ENCODE measurements at regions of chr1 and their contacts with region 1.

Region 1: GRCh38 chr1:93021539-93022134 is 57.4 kb upstream of the MTF2 start:
- DNase-seq: no peak
- H3K4me3 ChIP-seq: no peak overlapping the region
- H3K27ac ChIP-seq: no peak overlapping the region
- H3K27me3 ChIP-seq: no peaks in the 10 kb centered on the region
- CTCF ChIP-seq: peak; percentile 56 to 86 (median 75)

Region 2: DNA sequence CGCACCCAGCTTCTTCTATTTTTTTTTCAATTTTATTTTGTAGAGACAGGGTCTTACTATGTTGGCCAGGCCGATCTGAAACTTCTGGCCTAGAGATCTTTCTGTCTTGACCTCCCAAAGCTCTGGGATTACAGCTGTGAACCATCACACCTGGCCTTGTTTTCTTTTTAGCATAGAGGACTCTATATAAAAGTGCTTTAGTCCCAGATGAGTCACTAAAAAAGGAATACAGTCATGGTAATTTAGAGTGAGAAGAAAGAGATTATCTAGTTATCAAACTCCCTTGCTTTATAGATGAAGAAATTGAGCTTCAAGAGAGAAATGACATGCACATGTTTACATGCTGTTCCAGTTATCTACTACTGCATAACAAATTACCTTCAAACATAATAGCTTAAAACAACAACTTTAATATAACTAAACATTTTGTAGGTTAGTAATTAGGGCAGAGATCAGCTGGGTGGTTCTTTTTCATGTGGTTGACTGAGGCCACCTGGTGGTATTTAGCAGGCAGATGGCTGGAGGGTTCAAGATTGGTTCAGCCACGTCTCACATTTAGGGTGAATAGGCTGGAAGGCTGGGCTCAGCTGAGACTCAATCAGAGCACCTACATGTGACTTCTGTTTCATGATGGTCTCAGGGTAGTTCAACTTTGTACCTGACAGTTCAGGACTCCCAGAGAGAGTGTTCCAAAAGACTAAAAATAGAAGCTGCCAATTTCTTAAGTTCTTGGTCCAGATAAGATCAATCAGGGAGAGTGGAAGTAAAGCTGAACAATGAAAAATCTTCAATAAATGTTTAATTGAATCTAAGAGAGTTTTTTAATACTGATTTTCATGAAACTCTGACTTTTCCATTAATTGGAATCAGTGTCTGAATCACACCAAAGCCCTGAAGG is 40.5 kb after region 1 on chr1:
- intact Hi-C with region 1: loop called in 1 of 2 experiments (anchors 5 kb)
- DNase-seq: no peak
- H3K4me3 ChIP-seq: no peak overlapping the region
- H3K27ac ChIP-seq: no peak overlapping the region
- H3K27me3 ChIP-seq: peaks cover 0 to 7% (median 0%) of the 10 kb centered on the region in 45 donors
- CTCF ChIP-seq: peak in 51 of 56 donors; percentile 14 to 68 (median 43)